ENCODE measurements at regions of chr20 and their contacts with region 1.

Region 1: GRCh38 chr20:25254986-25255680 is 7.2 kb downstream of the PYGB start:
- DNase-seq: peak in 1 of 2 experiments; percentile 89
- H3K4me3 ChIP-seq: no peak overlapping the region; the same call in 1 of the 2 replicates
- H3K27ac ChIP-seq: peak overlapping the region; percentile 86; the same call in 1 of the 2 replicates
- H3K4me1 ChIP-seq: peaks cover 65% of the 10 kb centered on the region
- H3K27me3 ChIP-seq: no peaks in the 10 kb centered on the region
- CTCF ChIP-seq: no peak

Region 2: DNA sequence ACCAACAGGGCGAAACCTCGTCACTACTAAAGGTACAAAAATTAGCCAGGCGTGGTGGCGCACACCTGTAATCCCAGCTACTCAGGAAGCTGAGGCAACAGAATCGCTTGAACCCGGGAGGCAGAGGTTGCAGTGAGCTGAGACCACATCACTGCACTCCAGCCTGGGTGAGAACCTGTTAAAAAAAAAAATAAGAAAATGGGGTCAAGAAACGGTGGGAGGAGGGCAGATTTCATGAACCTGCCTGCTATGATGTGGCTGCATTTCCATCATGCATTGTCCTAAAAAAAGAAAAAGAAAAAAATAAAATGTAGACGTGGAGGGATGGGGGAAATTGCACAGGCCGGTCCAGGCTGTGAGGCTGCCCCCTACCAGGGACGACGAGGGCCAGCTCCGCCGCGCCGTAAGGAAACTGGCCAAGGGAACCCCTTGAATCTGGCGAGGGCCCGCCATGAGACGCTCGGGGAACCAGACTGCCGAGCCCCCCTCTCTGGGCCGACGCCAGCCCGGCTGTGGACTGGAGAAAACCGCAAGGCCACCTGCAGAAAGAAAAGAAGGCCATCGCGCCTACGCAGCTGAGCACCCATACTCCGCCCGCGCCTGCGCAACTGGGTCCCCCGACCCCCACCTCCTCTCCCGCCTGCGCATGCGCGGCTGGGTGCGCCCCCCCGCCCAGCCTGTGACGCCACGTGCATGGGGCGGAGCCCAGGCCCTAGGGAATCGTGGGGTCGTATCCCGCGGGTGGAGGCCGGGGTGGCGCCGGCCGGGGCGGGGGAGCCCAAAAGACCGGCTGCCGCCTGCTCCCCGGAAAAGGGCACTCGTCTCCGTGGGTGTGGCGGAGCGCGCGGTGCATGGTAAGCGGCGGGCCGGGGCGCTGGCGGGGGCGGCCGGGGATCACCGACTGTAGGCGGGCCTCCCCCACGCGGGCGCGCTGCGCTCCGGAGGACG is 59.8 kb before region 1 on chr20 and contains the start of gene ENTPD6:
- CTCF ChIA-PET with region 1: no interaction called
- POLR2A ChIA-PET with region 1: interaction called, 7 read pairs
- intact Hi-C with region 1: loop called (anchors 1 kb)
- DNase-seq: peak; percentile 68 to 96
- H3K4me3 ChIP-seq: peak within 1 kb of the TSS; percentile 93
- H3K27ac ChIP-seq: peak within 1 kb of the TSS; percentile 54
- H3K4me1 ChIP-seq: peaks cover 16% of the 10 kb centered on the region
- H3K27me3 ChIP-seq: no peaks in the 10 kb centered on the region
- CTCF ChIP-seq: no peak; the same call in 1 of the 2 replicates
- total RNA-seq, gene ENTPD6: 75.5 and 80.4 TPM in 2 replicates

Region 3: DNA sequence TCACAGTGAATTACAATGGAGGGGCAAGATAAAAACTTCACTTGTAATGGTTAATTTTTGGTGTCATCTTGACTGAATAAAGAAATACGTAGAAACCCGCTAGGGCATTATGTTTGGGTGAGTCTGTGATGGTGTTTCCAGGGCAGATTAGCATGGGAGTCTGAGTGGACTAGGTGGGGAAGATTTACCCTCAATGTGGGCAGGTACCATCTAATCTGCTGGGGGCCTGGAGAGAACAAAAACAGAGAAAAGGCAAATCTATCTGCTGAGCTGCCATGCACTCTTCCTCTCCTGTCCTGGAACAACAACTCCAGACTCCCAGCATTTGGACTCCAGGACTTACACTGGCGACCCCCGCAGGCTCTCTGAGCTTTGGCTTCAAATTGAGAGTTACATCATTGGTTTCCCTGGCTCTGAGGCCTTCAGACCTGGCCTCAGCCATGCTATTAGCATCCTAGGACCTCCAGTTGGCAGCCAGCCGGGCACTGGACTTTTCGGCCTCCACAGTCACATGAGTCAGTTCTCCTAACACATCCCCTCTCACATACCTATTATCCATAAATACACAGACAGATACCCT is 310.5 kb after region 1 on chr20:
- CTCF ChIA-PET with region 1: no interaction called
- POLR2A ChIA-PET with region 1: no interaction called
- intact Hi-C with region 1: no loop called
- DNase-seq: no peak
- H3K4me3 ChIP-seq: no peak overlapping the region
- H3K27ac ChIP-seq: no peak overlapping the region
- H3K4me1 ChIP-seq: no peaks in the 10 kb centered on the region
- H3K27me3 ChIP-seq: no peaks in the 10 kb centered on the region
- CTCF ChIP-seq: no peak